Activated CD4-positive, alpha-beta memory T cell treated with anti-CD3 and anti-CD28 coated beads for 36 hours (primary cell): ENCODE measurements at regions of chr15 and their contacts with region 1.

Region 1: DNA sequence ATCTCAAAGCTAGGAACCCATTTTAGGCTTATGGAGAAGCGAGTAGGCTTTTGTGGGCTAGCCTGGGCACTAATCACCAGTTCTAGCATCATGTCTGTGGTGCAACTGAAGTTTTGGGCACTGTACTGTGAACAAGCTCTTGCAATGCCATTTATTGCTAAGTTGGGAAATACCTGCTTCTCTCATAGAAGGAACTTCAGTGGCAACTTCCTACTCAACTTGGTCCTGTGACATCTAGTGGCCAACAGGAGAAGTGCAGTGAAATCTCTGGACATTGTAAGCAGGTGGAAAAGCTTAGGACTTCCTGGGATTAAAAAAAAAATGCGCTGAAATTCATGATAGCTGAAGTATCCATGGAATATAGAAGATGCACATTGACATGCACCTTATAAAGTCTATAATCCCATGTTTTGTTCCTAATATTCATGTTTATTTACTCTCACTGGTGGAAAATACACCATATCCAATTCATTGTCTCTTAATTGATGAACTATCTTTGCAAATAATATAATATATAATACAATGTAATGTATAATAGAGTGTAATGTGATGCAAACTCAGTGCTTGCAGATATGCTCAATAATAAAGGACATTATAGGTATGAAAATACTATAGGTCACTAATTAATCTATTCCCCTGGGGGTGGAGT is 6.5 kb upstream of the ALDH1A3 start:
- DNase-seq: peak; percentile 58
- H3K4me3 Mint-ChIP-seq: no peak overlapping the region
- H3K27ac Mint-ChIP-seq: no peak overlapping the region
- H3K4me1 Mint-ChIP-seq: no peaks in the 10 kb centered on the region
- H3K27me3 Mint-ChIP-seq: peaks cover 23% of the 10 kb centered on the region

Region 2: DNA sequence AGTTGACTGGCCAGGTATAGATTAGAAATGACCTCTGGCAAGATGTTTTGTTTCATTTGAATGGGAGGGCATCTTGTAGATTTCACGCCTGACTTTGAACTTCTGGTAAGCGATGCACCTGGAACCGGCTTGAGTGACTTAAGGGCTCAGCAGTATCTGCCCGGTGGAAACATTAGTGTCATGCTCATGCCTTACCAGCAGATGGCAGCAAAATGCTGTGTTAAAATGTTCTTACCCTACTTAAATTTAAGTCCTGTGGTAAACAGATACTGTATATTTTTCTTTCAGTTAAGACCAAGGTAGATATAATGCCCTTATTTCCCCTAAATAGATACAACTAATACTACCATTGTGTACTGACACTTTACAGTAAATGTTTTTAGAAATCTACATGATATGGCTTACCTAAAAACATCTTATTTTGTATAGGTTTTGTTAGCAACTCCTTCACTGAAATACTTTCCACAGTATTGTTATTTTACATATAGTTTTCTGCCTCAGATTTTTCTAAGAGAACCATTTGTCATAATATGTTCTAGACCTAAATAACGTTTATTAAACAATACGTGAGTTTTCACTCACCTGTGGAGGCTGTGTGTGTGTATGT is 245.3 kb before region 1 on chr15:
- CTCF ChIA-PET with region 1: interaction called, 14 read pairs
- POLR2A ChIA-PET with region 1: no interaction called
- intact Hi-C with region 1: loop called (anchors 1 kb)
- DNase-seq: peak; percentile 69
- H3K4me3 Mint-ChIP-seq: no peak overlapping the region
- H3K27ac Mint-ChIP-seq: no peak overlapping the region
- H3K4me1 Mint-ChIP-seq: peaks cover 8% of the 10 kb centered on the region
- H3K27me3 Mint-ChIP-seq: no peaks in the 10 kb centered on the region

Region 3: DNA sequence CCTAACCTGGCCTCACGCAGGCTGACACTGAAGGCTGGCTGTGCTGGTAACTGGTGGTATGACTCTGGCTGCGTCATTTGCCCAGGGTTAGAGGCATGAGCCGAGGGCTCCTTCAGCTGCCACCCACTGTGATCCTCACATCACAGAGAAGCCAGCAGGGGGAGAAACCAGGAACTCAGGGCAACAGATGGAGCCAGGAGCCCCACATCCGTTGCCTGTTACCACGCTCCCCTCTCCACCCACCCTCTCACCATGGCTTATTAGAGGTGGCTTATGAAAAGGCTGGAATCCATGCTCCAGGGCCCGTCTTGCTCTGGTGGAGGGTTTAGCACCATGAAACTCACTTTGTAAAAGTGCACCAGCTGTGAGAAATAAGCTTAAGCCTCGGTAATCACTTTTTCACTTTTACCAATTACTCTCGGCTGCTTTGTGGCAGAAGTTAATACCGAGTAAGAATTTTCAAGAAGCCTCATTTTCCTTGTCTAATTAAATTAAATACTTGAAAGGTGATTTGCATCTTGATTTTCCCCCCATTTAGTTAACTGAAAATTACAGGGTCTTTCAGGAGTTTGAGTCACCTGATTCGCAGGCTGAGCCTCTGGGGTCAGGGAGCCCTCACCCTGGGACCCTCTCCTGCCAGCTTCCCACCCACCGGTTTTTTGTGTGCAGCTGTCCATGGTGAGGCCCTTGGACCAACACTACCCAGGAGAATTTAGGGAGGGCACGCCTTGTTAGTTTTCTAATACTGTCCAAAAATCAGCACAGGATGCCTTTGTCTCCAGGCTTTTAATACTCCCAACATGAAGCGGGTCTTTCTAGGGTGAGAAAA is 209.9 kb before region 1 on chr15:
- CTCF ChIA-PET with region 1: no interaction called
- POLR2A ChIA-PET with region 1: no interaction called
- intact Hi-C with region 1: no loop called
- DNase-seq: no peak
- H3K4me3 Mint-ChIP-seq: no peak overlapping the region
- H3K27ac Mint-ChIP-seq: no peak overlapping the region
- H3K4me1 Mint-ChIP-seq: no peaks in the 10 kb centered on the region
- H3K27me3 Mint-ChIP-seq: no peaks in the 10 kb centered on the region

Region 4: DNA sequence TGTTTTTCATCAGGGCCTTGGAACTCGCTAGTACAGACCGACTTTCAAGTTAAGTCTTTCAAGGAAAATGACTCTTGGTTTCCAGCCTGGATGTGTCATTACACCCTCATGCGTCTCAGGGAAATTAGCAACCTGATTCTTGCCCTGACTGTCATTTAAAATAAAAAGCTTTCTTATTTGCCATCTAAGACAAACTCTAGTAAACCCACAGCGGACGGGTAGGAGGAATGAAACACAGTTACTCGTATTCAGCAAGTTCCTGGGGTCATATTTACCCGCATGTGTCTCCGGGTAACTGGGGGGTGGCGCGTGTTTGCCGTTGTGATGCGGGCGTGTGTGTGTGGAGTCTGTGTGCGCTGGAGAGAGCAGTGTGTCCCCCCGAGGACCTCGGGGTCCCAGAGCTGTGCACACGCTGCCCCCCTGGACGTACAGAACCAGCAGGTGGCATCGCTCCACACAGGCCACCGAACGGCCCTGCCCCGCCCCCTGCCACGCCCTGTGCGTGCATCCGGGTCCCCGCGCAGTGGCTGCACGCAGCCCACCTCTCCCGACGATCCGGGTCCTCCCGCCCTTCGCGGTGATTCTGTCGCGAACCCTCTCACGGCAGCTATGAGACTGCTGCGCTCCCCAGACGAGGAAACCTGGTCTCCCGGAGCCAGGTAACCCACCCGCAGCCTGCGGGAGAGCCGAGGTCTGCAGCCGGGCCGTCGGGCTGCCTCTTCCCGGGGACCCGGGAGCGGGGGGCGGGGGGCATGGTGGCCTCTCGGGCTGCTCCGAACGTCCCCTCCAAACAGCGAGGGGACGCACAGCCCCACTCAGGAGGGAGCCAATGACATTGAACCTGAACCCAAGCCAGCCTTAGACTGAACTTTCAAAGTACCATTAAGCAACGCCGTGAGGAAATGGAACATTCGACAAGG is 23.6 kb before region 1 on chr15:
- CTCF ChIA-PET with region 1: interaction called, 10 read pairs
- POLR2A ChIA-PET with region 1: no interaction called
- intact Hi-C with region 1: no loop called
- DNase-seq: peak; percentile 59
- H3K4me3 Mint-ChIP-seq: peak overlapping the region; percentile 75
- H3K27ac Mint-ChIP-seq: no peak overlapping the region
- H3K4me1 Mint-ChIP-seq: peaks cover 8% of the 10 kb centered on the region
- H3K27me3 Mint-ChIP-seq: peaks cover 15% of the 10 kb centered on the region

Region 5: GRCh38 chr15:100889385-100890050 is 16.4 kb after region 1 on chr15:
- CTCF ChIA-PET with region 1: interaction called, 10 read pairs
- POLR2A ChIA-PET with region 1: no interaction called
- intact Hi-C with region 1: no loop called
- DNase-seq: no peak
- H3K4me3 Mint-ChIP-seq: no peak overlapping the region
- H3K27ac Mint-ChIP-seq: no peak overlapping the region
- H3K4me1 Mint-ChIP-seq: no peaks in the 10 kb centered on the region
- H3K27me3 Mint-ChIP-seq: peaks cover 42% of the 10 kb centered on the region

Region 6: GRCh38 chr15:100997442-100997841 is 124.3 kb after region 1 on chr15:
- CTCF ChIA-PET with region 1: no interaction called
- POLR2A ChIA-PET with region 1: no interaction called
- intact Hi-C with region 1: no loop called
- DNase-seq: no peak
- H3K4me3 Mint-ChIP-seq: no peak overlapping the region
- H3K27ac Mint-ChIP-seq: no peak overlapping the region
- H3K4me1 Mint-ChIP-seq: no peaks in the 10 kb centered on the region
- H3K27me3 Mint-ChIP-seq: peaks cover 3% of the 10 kb centered on the region

Region 7: DNA sequence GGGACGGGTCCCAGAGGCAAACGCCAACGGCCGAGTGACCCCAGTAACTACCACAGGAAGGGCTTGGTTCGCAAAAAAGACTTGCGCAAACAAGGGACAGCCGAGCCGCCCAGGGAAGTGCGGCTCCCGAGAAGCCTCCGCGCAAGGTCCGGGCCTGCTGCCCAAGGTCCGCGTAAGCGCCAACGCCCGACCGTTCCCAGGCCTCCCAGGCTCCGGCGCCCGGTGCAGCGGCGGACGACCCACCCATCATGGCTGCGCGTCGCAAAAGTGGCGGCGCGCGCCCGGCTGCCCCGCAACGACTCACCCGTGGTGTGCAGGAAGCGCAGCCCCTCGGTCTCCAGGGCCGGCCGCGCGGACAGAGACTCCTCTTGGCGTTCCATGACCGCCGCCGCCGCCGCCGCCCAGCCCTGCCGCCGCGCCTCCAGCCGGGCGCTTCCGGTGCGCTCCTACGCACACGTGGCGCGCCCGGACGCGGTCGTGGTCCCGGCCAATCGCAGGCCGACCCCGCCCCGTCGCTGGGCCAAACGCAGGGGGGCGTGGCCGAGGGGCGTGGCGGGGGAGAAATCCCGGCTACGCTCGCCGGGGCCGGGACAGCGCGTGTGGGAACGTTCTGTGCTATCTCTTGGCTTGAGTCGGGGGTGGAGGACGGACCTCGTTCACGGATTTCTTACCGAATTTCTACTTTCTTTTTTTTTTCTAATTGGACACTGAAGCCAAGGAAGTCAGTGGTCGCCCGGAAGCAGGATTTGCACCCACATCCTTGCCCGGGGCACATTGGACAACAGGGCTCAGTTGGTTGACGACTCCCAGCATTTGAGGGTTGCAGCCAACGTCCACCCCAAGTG is 404.1 kb after region 1 on chr15 and contains the start of gene SELENOS:
- CTCF ChIA-PET with region 1: no interaction called
- POLR2A ChIA-PET with region 1: no interaction called
- intact Hi-C with region 1: no loop called
- DNase-seq: peak; percentile 90
- H3K4me3 Mint-ChIP-seq: peak within 1 kb of the TSS; percentile 92
- H3K27ac Mint-ChIP-seq: peak within 1 kb of the TSS; percentile 81
- H3K4me1 Mint-ChIP-seq: peaks cover 29% of the 10 kb centered on the region
- H3K27me3 Mint-ChIP-seq: no peaks in the 10 kb centered on the region
- total RNA-seq, gene SELENOS: 30.9 to 31.7 TPM